GM10248 (cell line): ENCODE measurements at regions of chr9 and their contacts with region 1.

Region 1: GRCh38 chr9:124126571-124127289 is 115.2 kb downstream of the LHX2 start:
- DNase-seq: peak; percentile 86
- CTCF ChIP-seq: peak; percentile 96

Region 2: DNA sequence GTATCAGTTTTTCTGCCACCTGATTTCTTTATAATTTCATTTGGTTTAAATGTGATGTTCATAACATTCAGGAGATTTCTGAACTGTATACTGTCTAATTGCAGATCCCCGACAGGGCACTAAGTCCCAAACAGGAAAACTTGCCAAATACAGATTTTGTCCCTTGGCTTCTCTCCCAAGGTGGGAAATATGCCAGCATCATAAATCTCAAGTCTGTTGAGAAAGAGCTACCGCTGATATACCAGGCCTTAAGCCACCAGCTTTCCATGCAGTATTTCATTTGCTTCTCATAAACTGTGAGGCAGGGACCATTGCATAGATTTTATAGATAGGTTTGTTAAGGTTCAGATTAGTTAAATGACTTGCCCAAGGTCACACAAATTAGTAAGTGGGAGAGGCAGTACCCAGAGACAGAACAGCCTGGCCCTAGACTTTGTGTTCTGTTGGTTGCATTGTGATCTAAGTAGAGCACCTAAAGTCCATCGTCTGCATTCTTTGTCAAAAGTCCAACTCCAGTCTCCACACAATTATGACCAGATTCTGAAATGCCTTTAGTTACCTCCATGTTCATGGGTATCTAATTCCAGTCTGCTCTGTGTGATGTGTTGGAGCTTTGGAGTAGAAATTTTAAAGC is 1077.0 kb before region 1 on chr9:
- CTCF ChIA-PET with region 1: no interaction called
- POLR2A ChIA-PET with region 1: no interaction called
- DNase-seq: no peak
- CTCF ChIP-seq: no peak

Region 3: GRCh38 chr9:124110307-124110915 is 16.3 kb before region 1 on chr9:
- CTCF ChIA-PET with region 1: interaction called, 19 read pairs
- POLR2A ChIA-PET with region 1: no interaction called
- DNase-seq: peak; percentile 64
- CTCF ChIP-seq: no peak

Region 4: GRCh38 chr9:124146031-124146561 is 19.4 kb after region 1 on chr9:
- CTCF ChIA-PET with region 1: interaction called, 22 read pairs
- POLR2A ChIA-PET with region 1: no interaction called
- DNase-seq: no peak
- CTCF ChIP-seq: no peak

Region 5: GRCh38 chr9:124267271-124267807 is 140.6 kb after region 1 on chr9:
- CTCF ChIA-PET with region 1: interaction called, 10 read pairs
- POLR2A ChIA-PET with region 1: no interaction called
- DNase-seq: no peak
- CTCF ChIP-seq: no peak

Region 6: DNA sequence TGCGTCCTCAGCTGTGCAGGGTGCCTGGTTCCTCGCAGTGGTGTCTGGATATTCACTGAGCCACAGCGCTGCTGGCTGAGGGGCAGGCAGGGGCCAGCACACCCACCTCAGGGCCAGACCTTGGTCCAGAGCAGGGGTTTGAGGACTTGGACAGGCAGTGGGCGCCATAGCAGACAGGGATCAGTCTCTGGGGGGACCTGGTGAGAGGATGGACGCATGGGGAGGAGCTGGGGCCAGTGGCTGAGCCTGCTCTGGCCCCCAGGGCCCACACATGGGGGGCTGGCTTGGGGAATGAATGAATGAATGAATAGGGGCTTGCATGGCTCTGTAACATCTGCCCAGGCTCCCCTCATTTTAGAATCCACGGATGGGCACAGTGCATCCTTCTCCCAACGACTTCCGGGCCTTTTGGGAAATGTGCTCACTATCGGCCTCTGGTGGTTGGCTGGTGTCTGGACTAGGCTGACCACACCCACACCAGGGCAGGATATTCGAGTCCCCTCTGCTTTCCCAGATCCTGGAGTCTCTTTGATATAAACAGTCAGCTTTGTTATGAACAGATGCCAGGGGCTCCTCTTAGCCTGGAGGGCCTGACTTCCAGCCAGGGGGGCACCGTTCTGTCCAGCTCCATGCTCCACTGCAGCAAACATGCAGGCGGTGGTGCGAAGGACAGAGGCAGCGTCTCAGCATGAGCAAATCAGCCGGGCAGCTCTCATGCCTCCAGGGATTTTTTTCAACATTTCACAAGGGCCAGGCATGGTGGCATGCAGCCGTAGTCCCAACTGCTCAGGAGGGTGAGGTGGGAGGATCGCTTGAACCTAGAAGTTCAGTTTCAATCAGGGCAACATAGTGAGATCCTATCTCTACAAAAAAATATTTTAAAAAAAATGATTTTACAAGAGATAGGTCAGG is 193.6 kb after region 1 on chr9:
- CTCF ChIA-PET with region 1: interaction called, 12 read pairs
- POLR2A ChIA-PET with region 1: no interaction called
- DNase-seq: peak; percentile 79
- CTCF ChIP-seq: peak; percentile 68

Region 7: DNA sequence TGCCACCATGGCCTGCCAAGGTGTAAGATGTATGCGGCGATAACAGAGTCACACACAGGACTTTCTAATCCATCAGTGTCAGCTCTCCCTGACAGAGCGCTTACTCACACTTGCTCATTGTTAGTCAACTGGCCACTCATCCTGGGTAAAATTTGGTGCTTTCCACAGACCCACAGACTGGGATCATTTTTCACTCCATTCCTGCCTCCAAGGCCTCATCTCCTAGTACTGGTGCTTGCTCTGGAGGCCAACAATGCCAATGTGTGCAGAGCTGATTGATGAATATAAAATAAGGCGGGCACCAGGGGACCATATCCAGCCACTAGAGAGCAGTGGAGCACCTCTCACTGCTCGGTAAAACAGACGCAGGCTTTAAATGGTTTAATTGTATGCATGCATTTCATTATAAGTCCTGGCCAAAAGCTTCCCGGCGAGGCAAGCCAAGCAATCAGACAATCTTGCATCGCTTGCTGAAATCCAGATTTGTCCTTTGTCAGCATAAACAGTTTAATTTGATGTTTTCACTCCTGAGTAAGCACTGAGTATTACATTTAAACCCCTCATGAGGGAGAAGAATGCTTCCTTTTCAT is 266.2 kb after region 1 on chr9:
- CTCF ChIA-PET with region 1: interaction called, 36 read pairs
- POLR2A ChIA-PET with region 1: no interaction called
- DNase-seq: no peak
- CTCF ChIP-seq: no peak